ENCODE measurements at regions of chr6 and their contacts with region 1.

Region 1: GRCh38 chr6:118934461-118935330 is at the start of gene MCM9:
- H3K4me3 ChIP-seq: peak within 1 kb of the TSS; percentile 85
- H3K27ac ChIP-seq: peak within 1 kb of the TSS; percentile 96
- H3K4me1 ChIP-seq: peaks cover 4% of the 10 kb centered on the region; the same call in 1 of the 2 replicates
- CTCF ChIP-seq: no peak

Region 2: GRCh38 chr6:118893807-118894424 is 40.8 kb before region 1 on chr6 and contains the start of gene ASF1A:
- CTCF ChIA-PET with region 1: interaction called, 5 read pairs
- POLR2A ChIA-PET with region 1: interaction called, 21 read pairs
- H3K4me3 ChIP-seq: peak within 1 kb of the TSS; percentile 94
- H3K27ac ChIP-seq: peak within 1 kb of the TSS; percentile 94
- H3K4me1 ChIP-seq: 0 out of 2 replicates have a peak, but pooled peaks cover 2% of the 10 kb centered on the region
- CTCF ChIP-seq: peak; percentile 73

Region 3: GRCh38 chr6:118923035-118923434 is 11.7 kb before region 1 on chr6:
- CTCF ChIA-PET with region 1: interaction called, 3 read pairs
- POLR2A ChIA-PET with region 1: interaction called, 10 read pairs
- H3K4me3 ChIP-seq: no peak overlapping the region
- H3K27ac ChIP-seq: no peak overlapping the region
- H3K4me1 ChIP-seq: no peaks in the 10 kb centered on the region
- CTCF ChIP-seq: no peak

Region 4: DNA sequence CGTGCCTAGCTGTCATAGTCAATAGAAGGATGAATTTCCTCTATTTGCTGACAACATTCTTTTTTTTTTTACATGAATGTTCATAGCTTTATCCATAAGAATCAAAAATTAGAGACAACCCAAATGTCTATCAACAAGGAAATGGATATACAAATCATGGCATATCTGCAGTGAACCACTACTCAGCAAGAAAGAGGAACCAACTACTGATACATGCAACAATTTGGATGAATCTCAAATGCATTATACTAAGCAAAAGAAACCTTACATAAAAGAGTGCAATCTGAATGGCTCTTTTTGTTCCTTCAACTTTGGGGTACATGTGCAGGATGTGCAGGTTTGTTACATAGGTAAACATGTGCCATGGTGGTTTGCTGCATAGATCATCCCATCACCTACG is 18.0 kb after region 1 on chr6:
- CTCF ChIA-PET with region 1: no interaction called
- POLR2A ChIA-PET with region 1: no interaction called
- H3K4me3 ChIP-seq: no peak overlapping the region
- H3K27ac ChIP-seq: no peak overlapping the region
- H3K4me1 ChIP-seq: no peaks in the 10 kb centered on the region
- CTCF ChIP-seq: no peak

Region 5: GRCh38 chr6:119313937-119314884 is 379.5 kb after region 1 on chr6:
- CTCF ChIA-PET with region 1: no interaction called
- POLR2A ChIA-PET with region 1: no interaction called
- H3K4me3 ChIP-seq: no peak overlapping the region
- H3K27ac ChIP-seq: no peak overlapping the region
- H3K4me1 ChIP-seq: no peaks in the 10 kb centered on the region
- CTCF ChIP-seq: no peak

Measured in HEK293 (cell line).